Mammary epithelial cell (primary cell): ENCODE measurements at regions of chr17 and their contacts with region 1.

Region 1: DNA sequence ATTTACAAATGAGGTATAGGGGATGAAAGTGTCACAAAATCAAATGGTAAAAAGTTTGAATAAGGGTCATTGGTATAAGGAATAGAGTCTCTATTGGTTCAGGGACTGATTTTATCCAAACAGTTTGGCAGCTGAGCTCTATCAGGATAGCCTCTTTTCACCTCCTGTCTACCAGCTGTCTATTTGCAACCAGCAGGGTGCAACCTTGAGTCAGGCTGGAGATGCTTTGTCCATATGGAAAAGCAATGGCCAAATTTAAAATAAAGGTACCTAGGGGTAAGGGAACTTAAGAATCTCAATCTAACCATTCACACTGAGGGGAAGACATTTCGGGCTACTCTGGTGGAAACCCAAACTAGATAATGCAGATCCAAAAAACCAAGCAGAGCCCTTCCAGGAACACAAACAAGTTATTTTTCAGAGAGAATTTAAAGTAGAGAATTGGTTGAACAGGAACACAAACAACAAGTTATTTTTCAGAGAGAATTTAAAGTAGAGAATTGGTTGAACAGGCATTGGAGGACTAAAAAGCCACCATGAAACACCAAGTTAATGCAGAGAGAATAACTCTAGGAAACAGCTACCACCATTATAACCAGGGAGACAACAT is 12.6 kb upstream of the CA10 start:
- DNase-seq: peak; percentile 33
- H3K4me3 ChIP-seq: no peak overlapping the region
- H3K27ac ChIP-seq: no peak overlapping the region
- H3K4me1 ChIP-seq: no peaks in the 10 kb centered on the region
- H3K27me3 ChIP-seq: peaks cover 2% of the 10 kb centered on the region
- CTCF ChIP-seq: peak; percentile 92 to 95

Region 2: DNA sequence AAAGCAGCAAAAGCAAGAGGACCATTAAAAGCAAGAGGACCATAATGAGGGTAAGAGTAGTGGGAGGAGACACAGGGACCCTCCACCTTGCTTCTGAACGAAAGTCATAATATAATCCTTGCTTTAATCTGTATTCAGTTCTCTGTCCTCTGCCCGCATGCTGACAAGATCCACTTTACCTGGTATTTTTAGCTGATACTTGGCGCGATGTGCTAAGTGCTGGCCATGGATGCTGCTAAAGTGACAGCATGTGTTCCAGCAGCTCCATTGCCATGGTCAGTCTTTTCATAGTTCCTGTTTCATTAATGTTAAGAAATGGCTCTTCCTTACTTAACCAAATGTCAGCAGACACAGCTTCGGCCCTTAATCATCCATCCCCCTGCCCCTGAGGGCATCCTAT is 99.4 kb before region 1 on chr17:
- CTCF ChIA-PET with region 1: no interaction called
- dilution Hi-C with region 1: no loop called
- in situ Hi-C with region 1: no loop called
- intact Hi-C with region 1: no loop called
- DNase-seq: no peak
- H3K4me3 ChIP-seq: no peak overlapping the region
- H3K27ac ChIP-seq: no peak overlapping the region
- H3K4me1 ChIP-seq: no peaks in the 10 kb centered on the region
- H3K27me3 ChIP-seq: peaks cover 2% of the 10 kb centered on the region
- CTCF ChIP-seq: no peak

Region 3: DNA sequence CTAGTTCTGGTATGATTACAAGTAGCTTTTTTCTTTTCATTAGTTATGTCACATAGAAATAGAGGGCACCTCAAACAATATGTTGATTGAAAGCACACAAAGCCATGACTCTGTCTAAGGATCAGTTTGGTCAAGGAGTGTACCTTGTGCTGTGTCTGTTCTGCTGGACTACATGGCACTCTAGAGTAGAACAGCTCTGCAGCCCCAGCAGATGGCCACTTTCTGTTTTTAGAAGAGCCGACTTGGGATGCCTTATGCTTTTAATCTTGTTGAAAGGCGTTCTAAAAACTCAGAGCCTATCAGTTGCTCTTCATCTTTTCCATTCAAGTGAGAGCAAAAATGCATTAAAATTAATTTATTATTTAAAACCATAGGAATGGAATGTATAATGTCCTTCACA is 36.7 kb after region 1 on chr17:
- CTCF ChIA-PET with region 1: no interaction called
- dilution Hi-C with region 1: no loop called
- in situ Hi-C with region 1: no loop called
- intact Hi-C with region 1: no loop called
- DNase-seq: no peak
- H3K4me3 ChIP-seq: no peak overlapping the region
- H3K27ac ChIP-seq: no peak overlapping the region
- H3K4me1 ChIP-seq: no peaks in the 10 kb centered on the region
- H3K27me3 ChIP-seq: no peaks in the 10 kb centered on the region
- CTCF ChIP-seq: no peak

Region 4: GRCh38 chr17:52297230-52298010 is 126.4 kb after region 1 on chr17:
- CTCF ChIA-PET with region 1: interaction called, 4 read pairs
- dilution Hi-C with region 1: no loop called
- in situ Hi-C with region 1: loop called (anchors 5 to 10 kb)
- intact Hi-C with region 1: loop called (anchors 1 kb)
- DNase-seq: peak; percentile 24
- H3K4me3 ChIP-seq: no peak overlapping the region
- H3K27ac ChIP-seq: no peak overlapping the region
- H3K4me1 ChIP-seq: no peaks in the 10 kb centered on the region
- H3K27me3 ChIP-seq: peaks cover 2% of the 10 kb centered on the region
- CTCF ChIP-seq: peak; percentile 65 to 76

Region 5: DNA sequence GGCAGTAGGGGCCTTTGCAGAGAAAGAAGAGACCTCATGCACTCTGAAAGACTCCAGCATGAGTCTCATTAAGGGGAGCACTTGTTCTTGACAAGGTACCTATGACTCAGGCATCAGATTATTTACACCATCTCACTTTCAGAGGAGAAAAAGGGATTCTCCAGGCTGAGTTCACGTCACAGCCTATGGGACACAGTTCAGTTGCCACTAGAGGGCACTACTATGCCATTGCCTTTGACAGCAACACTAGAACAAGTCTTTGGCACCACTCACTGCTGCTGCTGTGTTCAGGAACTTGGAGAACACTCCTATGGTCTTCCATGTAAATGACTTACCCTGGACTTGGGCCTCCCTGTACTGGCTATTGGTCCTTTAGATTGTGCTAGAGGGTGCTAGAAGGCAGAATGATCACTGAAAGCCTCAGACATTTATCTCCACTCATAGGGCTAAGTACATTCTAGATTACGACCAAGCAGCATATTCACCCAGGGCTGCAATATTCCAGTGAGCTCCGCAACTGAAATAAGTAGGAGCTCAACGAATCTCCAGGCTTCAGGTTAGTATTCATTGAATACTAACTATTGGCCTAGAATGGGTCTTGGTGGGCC is 212.5 kb after region 1 on chr17:
- CTCF ChIA-PET with region 1: no interaction called
- dilution Hi-C with region 1: no loop called
- in situ Hi-C with region 1: no loop called
- intact Hi-C with region 1: loop called (anchors 2 kb)
- DNase-seq: peak; percentile 64
- H3K4me3 ChIP-seq: no peak overlapping the region
- H3K27ac ChIP-seq: no peak overlapping the region
- H3K4me1 ChIP-seq: no peaks in the 10 kb centered on the region
- H3K27me3 ChIP-seq: no peaks in the 10 kb centered on the region
- CTCF ChIP-seq: peak; percentile 77 to 88